ENCODE measurements at regions of chr14 and their contacts with region 1.

Region 1: DNA sequence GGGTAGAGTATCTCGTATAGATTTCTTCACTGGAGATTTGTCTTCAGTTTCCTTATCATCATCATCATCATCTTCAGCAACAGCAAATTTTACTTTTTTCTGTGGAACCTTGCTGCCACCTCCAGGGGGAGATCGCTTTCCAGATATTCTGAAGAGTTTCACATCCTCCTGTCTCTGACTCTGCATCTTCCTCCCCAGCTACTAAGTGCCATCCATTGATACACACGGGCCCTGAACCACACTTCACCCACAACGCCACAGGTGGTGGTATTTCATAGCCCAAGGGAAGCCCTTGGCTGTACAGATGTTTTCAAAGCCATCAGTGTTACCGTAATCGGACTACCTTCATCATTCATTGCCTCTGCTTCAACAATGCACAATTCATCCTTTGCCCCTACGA is 82.2 kb downstream of the PPP2R5C start:
- DNase-seq: peak; percentile 81
- ATAC-seq: peak; percentile 65
- H3K4me3 Mint-ChIP-seq: no peak overlapping the region
- H3K27ac Mint-ChIP-seq: peak overlapping the region; percentile 79
- H3K4me1 Mint-ChIP-seq: peaks cover 82% of the 10 kb centered on the region
- H3K27me3 Mint-ChIP-seq: no peaks in the 10 kb centered on the region
- CTCF ChIP-seq: peak; percentile 64

Region 2: DNA sequence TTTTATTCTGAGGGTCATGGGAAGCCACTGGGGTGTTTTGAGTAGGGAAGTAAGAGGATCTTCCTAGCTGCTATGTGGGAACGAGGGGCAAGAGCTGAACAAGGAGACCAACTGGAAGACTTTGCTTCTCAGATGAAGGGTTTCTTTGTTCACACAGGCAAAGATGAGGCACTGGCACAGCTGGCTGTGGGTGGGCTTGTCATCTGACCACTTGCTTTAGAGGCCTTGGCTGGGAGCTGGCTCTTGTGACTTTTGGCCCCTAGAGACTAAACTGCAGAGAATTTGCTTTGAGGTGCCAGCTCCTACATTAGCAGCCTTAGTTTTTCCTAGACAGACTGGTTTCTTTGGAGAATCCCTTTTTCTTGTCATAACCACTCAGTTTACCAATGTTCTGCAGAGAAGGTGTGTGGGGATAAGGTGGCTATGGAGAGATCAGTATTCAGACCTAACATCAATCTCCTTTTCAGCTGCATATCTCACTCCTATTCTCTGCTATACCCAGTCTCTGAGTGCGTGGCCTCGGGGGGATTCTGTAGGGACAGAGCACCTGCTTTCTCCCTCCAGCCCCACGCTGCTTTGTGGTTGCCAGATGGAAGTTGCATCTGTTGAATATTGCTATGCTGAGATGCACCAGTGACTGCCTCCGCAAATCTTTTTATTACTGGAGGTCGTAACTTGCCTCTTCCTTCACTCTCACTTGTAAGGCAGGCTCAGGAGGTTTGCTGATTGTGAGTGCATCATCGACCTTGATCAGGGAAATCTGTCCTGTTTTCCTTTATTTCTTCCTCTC is 69.5 kb before region 1 on chr14:
- CTCF ChIA-PET with region 1: interaction called, 49 read pairs
- POLR2A ChIA-PET with region 1: interaction called, 3 read pairs
- intact Hi-C with region 1: loop called (anchors 5 kb)
- DNase-seq: no peak
- ATAC-seq: no peak
- H3K4me3 Mint-ChIP-seq: no peak overlapping the region
- H3K27ac Mint-ChIP-seq: peak overlapping the region; percentile 12
- H3K4me1 Mint-ChIP-seq: peaks cover 25% of the 10 kb centered on the region
- H3K27me3 Mint-ChIP-seq: peaks cover 1% of the 10 kb centered on the region
- CTCF ChIP-seq: no peak

Region 3: DNA sequence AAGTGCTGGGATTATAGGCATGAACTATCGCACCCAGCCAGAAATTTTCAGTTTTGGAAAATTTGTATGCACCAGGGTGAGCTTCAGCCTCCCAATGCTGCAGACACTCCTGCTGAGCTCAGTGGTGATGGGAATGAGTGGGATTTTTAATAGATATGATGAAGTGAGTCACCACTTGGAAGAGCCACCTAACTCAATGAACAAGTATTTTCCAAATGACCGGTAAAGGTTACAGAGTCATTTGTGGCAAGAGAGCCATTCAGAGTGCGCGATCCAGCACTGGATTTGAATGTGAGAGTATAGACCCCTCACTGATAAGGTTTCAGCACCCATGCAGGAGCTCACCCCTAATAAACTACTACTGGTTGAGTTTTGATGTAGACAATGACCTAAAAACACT is 18.5 kb after region 1 on chr14:
- CTCF ChIA-PET with region 1: interaction called, 11 read pairs
- POLR2A ChIA-PET with region 1: interaction called, 4 read pairs
- intact Hi-C with region 1: no loop called
- DNase-seq: no peak
- ATAC-seq: no peak
- H3K4me3 Mint-ChIP-seq: no peak overlapping the region
- H3K27ac Mint-ChIP-seq: peak overlapping the region; percentile 10
- H3K4me1 Mint-ChIP-seq: peaks cover 49% of the 10 kb centered on the region
- H3K27me3 Mint-ChIP-seq: no peaks in the 10 kb centered on the region
- CTCF ChIP-seq: no peak

Measured in activated CD8-positive, alpha-beta T cell treated with anti-CD3 and anti-CD28 coated beads for 36 hours (primary cell).